Tibial artery (tissue), 4 donors: ENCODE measurements at regions of chr11 and their contacts with region 1.

Region 1: DNA sequence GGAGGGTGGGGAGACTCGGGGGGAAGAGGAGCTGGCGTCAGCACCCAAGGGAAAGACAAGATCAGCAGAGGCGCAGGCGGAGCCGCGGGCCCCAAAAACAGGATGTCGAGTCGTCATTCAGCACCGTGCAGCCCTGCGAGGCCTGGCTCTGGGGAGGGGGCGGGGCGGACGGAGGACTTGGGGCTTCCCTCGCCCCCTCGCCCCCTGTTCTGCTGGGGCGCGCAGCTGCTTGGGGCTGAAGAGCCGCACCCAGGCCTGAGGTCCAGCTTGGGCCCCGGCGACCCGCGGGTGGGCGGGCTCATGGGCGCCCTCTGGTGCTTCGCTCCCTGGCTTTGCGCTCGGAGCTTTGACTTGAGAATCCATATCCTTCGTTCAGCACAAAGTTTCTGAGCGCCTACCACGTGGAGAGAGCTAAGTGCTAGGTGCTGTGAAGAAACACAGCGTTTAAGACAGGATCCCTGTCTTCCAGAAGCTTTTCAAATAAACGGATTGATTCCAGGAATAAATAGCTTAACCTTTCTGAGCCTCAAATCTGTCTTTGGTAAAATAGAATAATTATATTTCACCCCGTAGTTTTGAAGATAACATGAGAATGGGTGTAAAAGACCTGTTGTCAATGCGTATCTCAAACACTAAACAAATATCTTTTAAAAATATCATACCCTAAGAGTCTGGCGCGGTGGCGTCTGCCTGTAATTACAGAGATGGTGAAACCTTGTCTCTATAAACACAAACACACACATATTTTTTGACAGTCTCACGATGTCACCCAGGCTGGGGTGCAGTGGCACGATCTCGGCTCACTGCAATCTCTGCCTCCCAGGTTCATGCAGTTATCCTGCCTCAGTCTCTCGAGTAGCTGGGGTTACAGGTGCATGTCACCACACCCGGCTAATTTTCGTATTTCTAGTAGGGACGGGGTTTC is 929 bp upstream of the RHOG start:
- DNase-seq: peak; percentile 76 to 91
- H3K4me3 ChIP-seq: peak overlapping the region; percentile 96 to 99
- H3K27ac ChIP-seq: peak overlapping the region; percentile 94 to 99
- H3K4me1 ChIP-seq: peaks cover 0 to 34% (median 16%) of the 10 kb centered on the region in 4 donors
- H3K27me3 ChIP-seq: no peaks in the 10 kb centered on the region
- CTCF ChIP-seq: peak; percentile 57 to 82

Region 2: GRCh38 chr11:3797329-3798095 is 44.2 kb before region 1 on chr11 and contains the start of gene NUP98:
- intact Hi-C with region 1: loop called (anchors 5 kb)
- DNase-seq: peak; percentile 100
- H3K4me3 ChIP-seq: peak within 1 kb of the TSS; percentile 86 to 92
- H3K27ac ChIP-seq: peak within 1 kb of the TSS; percentile 96 to 98
- H3K4me1 ChIP-seq: peaks cover 0 to 37% (median 22%) of the 10 kb centered on the region in 4 donors
- H3K27me3 ChIP-seq: no peaks in the 10 kb centered on the region
- CTCF ChIP-seq: no peak

Region 3: DNA sequence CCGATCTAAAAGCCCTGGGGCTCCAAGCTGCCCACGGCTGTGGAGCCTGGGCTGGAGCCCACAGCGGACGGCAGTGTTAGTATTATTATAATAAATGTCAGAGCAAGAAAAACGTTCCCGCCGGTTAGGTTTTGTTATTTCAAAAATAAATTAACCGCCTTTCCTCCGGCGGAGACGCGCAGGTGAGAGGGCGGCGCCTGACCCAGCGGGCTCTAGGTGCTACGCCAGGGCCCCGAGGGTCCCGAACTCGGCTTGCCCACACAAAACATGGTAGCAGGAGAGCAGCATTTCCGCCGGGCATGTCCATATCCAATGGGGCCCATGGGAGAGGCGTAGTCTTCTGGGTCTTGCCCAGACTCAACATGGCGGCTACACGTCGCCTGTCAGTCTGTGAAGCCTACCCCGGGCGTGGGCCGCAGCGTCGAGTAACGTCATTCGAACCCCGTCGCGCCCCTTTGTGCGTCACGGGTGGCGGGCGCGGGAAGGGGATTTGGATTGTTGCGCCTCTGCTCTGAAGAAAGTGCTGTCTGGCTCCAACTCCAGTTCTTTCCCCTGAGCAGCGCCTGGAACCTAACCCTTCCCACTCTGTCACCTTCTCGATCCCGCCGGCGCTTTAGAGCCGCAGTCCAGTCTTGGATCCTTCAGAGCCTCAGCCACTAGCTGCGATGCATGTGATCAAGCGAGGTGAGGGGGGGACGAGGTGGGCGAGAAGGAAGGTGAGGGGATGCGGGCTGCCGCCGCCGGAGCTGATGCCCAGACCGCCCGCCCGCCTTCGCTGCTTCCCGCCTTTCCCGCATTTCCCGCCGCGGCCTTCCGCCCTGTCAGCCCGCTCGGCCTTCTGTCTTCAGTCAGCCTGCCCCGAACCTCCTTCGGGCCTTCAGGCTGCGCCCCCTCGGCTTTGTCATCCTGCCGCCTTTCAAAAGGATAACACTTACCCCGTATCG is 252.9 kb after region 1 on chr11 and contains the start of gene RRM1:
- intact Hi-C with region 1: loop called (anchors 5 kb)
- DNase-seq: peak; percentile 95 to 97
- H3K4me3 ChIP-seq: peak within 1 kb of the TSS; percentile 65 to 68
- H3K27ac ChIP-seq: peak within 1 kb of the TSS; percentile 85 to 86
- H3K4me1 ChIP-seq: peaks cover 0 to 24% (median 11%) of the 10 kb centered on the region in 4 donors
- H3K27me3 ChIP-seq: no peaks in the 10 kb centered on the region
- CTCF ChIP-seq: no peak